CD14-positive monocyte (primary cell): ENCODE measurements at regions of chr5 and their contacts with region 1.

Region 1: GRCh38 chr5:143413958-143414669 is 10.6 kb upstream of the NR3C1 start:
- DNase-seq: no peak
- H3K4me3 ChIP-seq: no peak overlapping the region
- H3K4me3 Mint-ChIP-seq: no peak overlapping the region
- H3K27ac ChIP-seq: no peak overlapping the region
- H3K27ac Mint-ChIP-seq: peak overlapping the region in 2 of 7 donors; percentile 58 to 82
- H3K4me1 ChIP-seq: peaks cover 24 to 41% of the 10 kb centered on the region in 2 donors
- H3K4me1 Mint-ChIP-seq: peaks cover 42% of the 10 kb centered on the region
- H3K27me3 ChIP-seq: no peaks in the 10 kb centered on the region
- H3K27me3 Mint-ChIP-seq: no peaks in the 10 kb centered on the region
- CTCF ChIP-seq: no peak

Region 2: GRCh38 chr5:142994218-142994617 is 419.9 kb before region 1 on chr5:
- intact Hi-C with region 1: no loop called
- DNase-seq: peak; percentile 63 to 74 (median 66)
- H3K4me3 ChIP-seq: no peak overlapping the region
- H3K4me3 Mint-ChIP-seq: peak overlapping the region in 1 of 2 donors; percentile 8
- H3K27ac ChIP-seq: peak overlapping the region in 1 of 2 donors; percentile 69
- H3K27ac Mint-ChIP-seq: peak overlapping the region; percentile 63 to 96 (median 85)
- H3K4me1 ChIP-seq: peaks cover 29 to 44% of the 10 kb centered on the region in 2 donors
- H3K4me1 Mint-ChIP-seq: peaks cover 58% of the 10 kb centered on the region
- H3K27me3 ChIP-seq: no peaks in the 10 kb centered on the region
- H3K27me3 Mint-ChIP-seq: no peaks in the 10 kb centered on the region
- CTCF ChIP-seq: no peak

Region 3: GRCh38 chr5:143403593-143404415 is 10.3 kb before region 1 on chr5 and contains the start of gene NR3C1:
- intact Hi-C with region 1: no loop called
- DNase-seq: peak; percentile 84 to 89 (median 86)
- H3K4me3 ChIP-seq: peak within 1 kb of the TSS; percentile 64 to 98 (median 88)
- H3K4me3 Mint-ChIP-seq: peak within 1 kb of the TSS; percentile 90 to 93
- H3K27ac ChIP-seq: peak within 1 kb of the TSS; percentile 96 to 98
- H3K27ac Mint-ChIP-seq: peak within 1 kb of the TSS; percentile 98 to 99 (median 99)
- H3K4me1 ChIP-seq: peaks cover 28 to 46% of the 10 kb centered on the region in 2 donors
- H3K4me1 Mint-ChIP-seq: peaks cover 35% of the 10 kb centered on the region
- H3K27me3 ChIP-seq: no peaks in the 10 kb centered on the region
- H3K27me3 Mint-ChIP-seq: no peaks in the 10 kb centered on the region
- CTCF ChIP-seq: peak; percentile 64
- polyA plus RNA-seq, gene NR3C1: 25.4 to 82.8 (median 75.1) TPM

Region 4: GRCh38 chr5:143481666-143482531 is 67.8 kb after region 1 on chr5:
- intact Hi-C with region 1: loop called in 1 of 2 experiments (anchors 10 kb)
- DNase-seq: no peak
- H3K4me3 ChIP-seq: no peak overlapping the region
- H3K4me3 Mint-ChIP-seq: no peak overlapping the region
- H3K27ac ChIP-seq: no peak overlapping the region
- H3K27ac Mint-ChIP-seq: no peak overlapping the region
- H3K4me1 ChIP-seq: peaks cover 5 to 16% of the 10 kb centered on the region in 2 donors
- H3K4me1 Mint-ChIP-seq: peaks cover 15% of the 10 kb centered on the region
- H3K27me3 ChIP-seq: no peaks in the 10 kb centered on the region
- H3K27me3 Mint-ChIP-seq: peaks cover 0 to 1% (median 0%) of the 10 kb centered on the region in 3 donors
- CTCF ChIP-seq: no peak